B cell (primary cell): ENCODE measurements at regions of chrX and their contacts with region 1.

Region 1: DNA sequence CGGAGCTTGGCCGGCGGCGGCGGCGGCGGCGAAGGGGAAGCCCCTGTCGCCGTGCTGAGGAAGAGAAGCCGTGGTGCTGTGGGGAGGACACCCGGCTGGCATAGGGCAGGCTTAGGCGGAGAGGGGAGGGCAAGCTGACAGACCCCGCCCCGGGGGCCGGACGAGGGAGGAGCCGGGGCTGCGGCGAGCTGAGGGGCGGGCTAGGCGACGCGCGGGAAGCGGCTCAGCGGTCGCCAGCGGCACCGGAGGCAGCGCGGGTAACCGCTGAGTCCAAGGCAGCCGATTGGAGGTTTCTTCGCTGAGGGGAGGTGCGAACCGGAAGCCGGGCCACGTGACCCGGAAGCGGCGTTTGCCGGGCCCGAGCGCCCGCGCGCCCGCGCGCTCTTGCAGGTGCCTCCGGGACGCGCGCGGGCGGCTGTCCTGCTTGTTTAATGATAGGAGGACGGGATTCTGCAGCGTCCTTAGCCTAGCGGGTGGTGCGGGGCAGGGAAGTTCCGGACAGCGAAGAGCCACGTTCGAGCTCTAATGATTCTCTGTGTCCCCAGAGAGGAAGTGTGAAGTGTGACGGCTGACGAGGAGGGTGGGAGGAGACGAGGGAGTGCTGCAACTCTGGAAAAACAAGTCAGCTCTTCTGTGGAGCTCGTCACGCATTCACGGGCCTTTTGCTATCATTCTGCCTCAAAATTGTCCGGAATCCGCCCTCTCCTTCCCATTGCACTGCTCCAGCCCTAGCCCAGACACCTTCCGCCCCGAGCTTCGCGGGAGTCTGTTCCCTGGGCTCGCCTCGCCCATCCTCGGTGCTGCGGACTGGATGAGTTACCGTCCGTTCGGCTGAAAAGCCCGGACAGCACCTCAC is at the start of gene AP1S2:
- DNase-seq: peak; percentile 95
- ATAC-seq: peak; percentile 90
- H3K4me3 ChIP-seq: peak within 1 kb of the TSS; percentile 66 to 79 (median 78)
- H3K4me3 Mint-ChIP-seq: peak within 1 kb of the TSS; percentile 97
- H3K27ac ChIP-seq: peak within 1 kb of the TSS; percentile 94 to 97
- H3K27ac Mint-ChIP-seq: peak within 1 kb of the TSS; percentile 99
- H3K4me1 ChIP-seq: peaks cover 18 to 25% of the 10 kb centered on the region in 2 donors
- H3K4me1 Mint-ChIP-seq: peaks cover 36% of the 10 kb centered on the region
- H3K27me3 ChIP-seq: no peaks in the 10 kb centered on the region
- H3K27me3 Mint-ChIP-seq: no peaks in the 10 kb centered on the region
- CTCF ChIP-seq: no peak
- total RNA-seq, gene AP1S2: 33.9 and 37.8 TPM in 2 replicates

Region 2: DNA sequence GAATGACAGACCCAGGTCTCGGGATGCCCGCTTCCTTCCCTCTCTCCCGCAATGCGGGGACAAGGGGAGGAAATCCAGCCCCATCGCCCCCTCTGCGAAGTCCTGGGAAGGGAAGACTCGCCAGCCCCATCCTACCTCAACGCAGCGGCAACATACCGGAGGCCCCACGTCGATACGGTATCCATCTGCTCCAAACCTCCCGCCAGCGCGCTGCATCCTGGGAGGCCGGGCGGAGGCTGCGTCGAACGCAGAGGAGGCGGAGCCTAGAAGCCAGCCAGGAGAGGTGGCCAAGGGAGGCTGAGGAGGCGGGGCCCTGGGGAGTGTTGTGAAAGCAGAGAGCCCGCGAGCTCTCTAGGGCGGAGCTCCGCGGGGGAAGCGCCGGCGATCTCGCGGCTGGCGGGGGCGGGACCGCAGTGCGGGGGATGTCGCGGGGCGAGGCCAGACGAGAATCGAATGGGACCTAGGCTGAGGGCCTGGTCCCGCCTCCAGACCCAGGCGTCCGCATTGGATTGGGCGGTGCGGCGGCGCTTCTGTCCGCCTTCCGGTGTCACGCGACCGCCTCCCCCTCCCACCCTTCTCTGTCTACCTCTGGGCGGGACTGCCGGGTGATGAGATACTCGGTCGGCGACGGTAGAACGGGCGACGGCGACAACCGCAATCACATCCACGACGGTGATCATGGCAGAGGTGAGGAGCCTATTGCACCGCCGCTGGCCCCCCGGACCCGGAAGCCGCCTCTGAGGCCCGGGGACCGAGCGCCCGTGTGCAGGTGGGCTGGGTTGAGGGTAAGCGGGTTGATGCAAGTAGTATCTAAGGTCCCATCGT is 981.9 kb before region 1 on chrX and contains the starts of genes FANCB and MOSPD2:
- CTCF ChIA-PET with region 1: no interaction called
- POLR2A ChIA-PET with region 1: no interaction called
- intact Hi-C with region 1: loop called (anchors 10 kb)
- DNase-seq: peak; percentile 94
- ATAC-seq: peak; percentile 91
- H3K4me3 ChIP-seq: peak within 1 kb of the TSS; percentile 69 to 89 (median 75)
- H3K4me3 Mint-ChIP-seq: peak within 1 kb of the TSS; percentile 92
- H3K27ac ChIP-seq: peak within 1 kb of the TSS; percentile 80 to 85
- H3K27ac Mint-ChIP-seq: peak within 1 kb of the TSS; percentile 93
- H3K4me1 ChIP-seq: peaks cover 7 to 11% of the 10 kb centered on the region in 2 donors
- H3K4me1 Mint-ChIP-seq: peaks cover 13% of the 10 kb centered on the region
- H3K27me3 ChIP-seq: no peaks in the 10 kb centered on the region
- H3K27me3 Mint-ChIP-seq: no peaks in the 10 kb centered on the region
- CTCF ChIP-seq: no peak
- total RNA-seq, gene FANCB: 3.9 and 7.6 TPM in 2 replicates
- total RNA-seq, gene MOSPD2: 23.1 and 27.0 TPM in 2 replicates

Region 3: GRCh38 chrX:15619061-15619777 is 235.7 kb before region 1 on chrX:
- CTCF ChIA-PET with region 1: no interaction called
- POLR2A ChIA-PET with region 1: no interaction called
- intact Hi-C with region 1: no loop called
- DNase-seq: no peak
- ATAC-seq: no peak
- H3K4me3 ChIP-seq: no peak overlapping the region
- H3K4me3 Mint-ChIP-seq: no peak overlapping the region
- H3K27ac ChIP-seq: no peak overlapping the region
- H3K27ac Mint-ChIP-seq: no peak overlapping the region
- H3K4me1 ChIP-seq: no peaks in the 10 kb centered on the region
- H3K4me1 Mint-ChIP-seq: no peaks in the 10 kb centered on the region
- H3K27me3 ChIP-seq: peaks cover 0 to 5% (median 0%) of the 10 kb centered on the region in 4 experiments
- H3K27me3 Mint-ChIP-seq: no peaks in the 10 kb centered on the region
- CTCF ChIP-seq: no peak

Region 4: GRCh38 chrX:15737960-15738902 is 116.7 kb before region 1 on chrX and contains the start of gene CA5B:
- CTCF ChIA-PET with region 1: no interaction called
- POLR2A ChIA-PET with region 1: interaction called, 13 read pairs
- intact Hi-C with region 1: loop called (anchors 1 kb)
- DNase-seq: peak; percentile 95
- ATAC-seq: peak; percentile 94
- H3K4me3 ChIP-seq: peak within 1 kb of the TSS; percentile 17 to 84 (median 72)
- H3K4me3 Mint-ChIP-seq: peak within 1 kb of the TSS; percentile 95
- H3K27ac ChIP-seq: peak within 1 kb of the TSS; percentile 42 to 58
- H3K27ac Mint-ChIP-seq: peak within 1 kb of the TSS; percentile 91
- H3K4me1 ChIP-seq: peaks cover 18 to 19% of the 10 kb centered on the region in 2 donors
- H3K4me1 Mint-ChIP-seq: peaks cover 35% of the 10 kb centered on the region
- H3K27me3 ChIP-seq: no peaks in the 10 kb centered on the region
- H3K27me3 Mint-ChIP-seq: no peaks in the 10 kb centered on the region
- CTCF ChIP-seq: no peak
- total RNA-seq, gene CA5B: 17.2 and 17.7 TPM in 2 replicates

Region 5: GRCh38 chrX:15789979-15790768 is 64.8 kb before region 1 on chrX and contains the start of gene ZRSR2:
- CTCF ChIA-PET with region 1: interaction called, 3 read pairs
- POLR2A ChIA-PET with region 1: interaction called, 5 read pairs
- intact Hi-C with region 1: loop called (anchors 1 kb)
- DNase-seq: peak; percentile 89
- ATAC-seq: peak; percentile 92
- H3K4me3 ChIP-seq: peak within 1 kb of the TSS; percentile 74 to 98 (median 88)
- H3K4me3 Mint-ChIP-seq: no peak within 1 kb of the TSS
- H3K27ac ChIP-seq: peak within 1 kb of the TSS; percentile 88 to 95
- H3K27ac Mint-ChIP-seq: no peak within 1 kb of the TSS
- H3K4me1 ChIP-seq: peaks cover 25 to 27% of the 10 kb centered on the region in 2 donors
- H3K4me1 Mint-ChIP-seq: peaks cover 20% of the 10 kb centered on the region
- H3K27me3 ChIP-seq: no peaks in the 10 kb centered on the region
- H3K27me3 Mint-ChIP-seq: no peaks in the 10 kb centered on the region
- CTCF ChIP-seq: no peak
- total RNA-seq, gene ZRSR2: 27.8 and 28.2 TPM in 2 replicates

Region 6: DNA sequence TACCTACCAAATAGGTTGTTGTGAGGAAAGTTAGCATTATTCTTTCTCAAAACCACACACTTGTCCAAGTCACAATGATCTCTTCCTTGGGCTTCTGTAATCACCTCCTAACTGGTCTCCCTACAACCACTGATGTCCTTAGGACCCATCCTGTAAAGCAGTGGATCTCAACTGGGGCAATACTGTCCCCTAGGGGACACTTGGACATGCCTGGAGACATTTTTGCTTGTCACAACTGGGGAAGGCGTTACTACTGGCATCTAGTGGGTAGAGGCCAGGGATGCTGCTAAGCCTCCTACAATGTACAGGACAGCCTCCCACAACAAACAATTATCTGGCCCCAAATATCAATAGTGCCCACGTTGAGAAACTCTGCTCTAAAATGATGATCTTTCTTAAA is 118.4 kb after region 1 on chrX:
- CTCF ChIA-PET with region 1: interaction called, 5 read pairs
- POLR2A ChIA-PET with region 1: interaction called, 5 read pairs
- intact Hi-C with region 1: loop called (anchors 1 kb)
- DNase-seq: peak; percentile 59
- ATAC-seq: peak; percentile 75
- H3K4me3 ChIP-seq: no peak overlapping the region
- H3K4me3 Mint-ChIP-seq: no peak overlapping the region
- H3K27ac ChIP-seq: no peak overlapping the region
- H3K27ac Mint-ChIP-seq: no peak overlapping the region
- H3K4me1 ChIP-seq: peaks cover 3 to 15% of the 10 kb centered on the region in 2 donors
- H3K4me1 Mint-ChIP-seq: peaks cover 22% of the 10 kb centered on the region
- H3K27me3 ChIP-seq: no peaks in the 10 kb centered on the region
- H3K27me3 Mint-ChIP-seq: no peaks in the 10 kb centered on the region
- CTCF ChIP-seq: peak; percentile 42

Region 7: GRCh38 chrX:16786139-16786790 is 931.3 kb after region 1 on chrX and contains the start of gene TXLNG:
- CTCF ChIA-PET with region 1: no interaction called
- POLR2A ChIA-PET with region 1: no interaction called
- intact Hi-C with region 1: loop called (anchors 10 kb)
- DNase-seq: peak; percentile 95
- ATAC-seq: peak; percentile 94
- H3K4me3 ChIP-seq: peak within 1 kb of the TSS; percentile 68 to 89 (median 81)
- H3K4me3 Mint-ChIP-seq: peak within 1 kb of the TSS; percentile 96
- H3K27ac ChIP-seq: peak within 1 kb of the TSS; percentile 89 to 95
- H3K27ac Mint-ChIP-seq: peak within 1 kb of the TSS; percentile 95
- H3K4me1 ChIP-seq: peaks cover 8 to 11% of the 10 kb centered on the region in 2 donors
- H3K4me1 Mint-ChIP-seq: peaks cover 17% of the 10 kb centered on the region
- H3K27me3 ChIP-seq: no peaks in the 10 kb centered on the region
- H3K27me3 Mint-ChIP-seq: no peaks in the 10 kb centered on the region
- CTCF ChIP-seq: no peak
- total RNA-seq, gene TXLNG: 12.5 and 13.5 TPM in 2 replicates